Esophagus squamous epithelium (tissue), 5 donors: ENCODE measurements at regions of chr6 and their contacts with region 1.

Region 1: DNA sequence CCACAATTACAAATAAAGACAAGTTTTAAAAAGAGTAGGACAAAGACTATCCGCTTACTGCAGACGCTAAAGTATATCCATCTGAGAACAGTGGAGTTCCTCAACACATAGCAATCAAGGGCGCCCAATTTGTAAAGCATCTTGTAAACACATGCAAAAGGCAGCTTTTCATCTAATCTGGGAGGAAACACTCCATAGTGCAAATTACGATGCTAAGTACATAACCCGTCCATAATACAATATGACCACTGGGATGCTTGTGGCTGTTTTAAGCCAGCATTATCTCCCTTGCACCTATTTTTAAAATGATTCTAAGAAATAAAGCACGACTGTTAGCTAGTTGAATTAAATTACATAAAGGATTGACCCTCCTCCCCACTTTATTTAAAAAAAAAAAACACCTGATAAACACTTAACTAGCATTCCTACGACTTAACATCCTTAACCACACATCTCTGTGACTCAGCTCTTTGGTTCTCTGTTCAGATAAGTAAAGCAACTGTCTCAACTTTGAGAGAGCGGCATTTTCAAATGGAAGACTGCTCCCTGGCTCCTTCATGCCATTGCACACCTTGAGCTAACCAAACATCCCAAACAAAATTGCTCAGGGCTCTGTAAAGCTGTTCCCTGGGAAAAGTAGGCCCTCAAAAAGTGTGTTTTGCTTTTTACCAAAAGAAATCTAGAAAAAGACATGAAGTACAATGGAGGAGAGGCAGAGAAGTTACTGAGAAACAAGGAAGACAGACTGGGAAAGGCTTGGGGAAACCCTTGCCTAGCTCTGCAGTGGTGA is 14.2 kb downstream of the SLC22A23 start:
- DNase-seq: no peak
- H3K4me3 ChIP-seq: no peak overlapping the region
- H3K27ac ChIP-seq: no peak overlapping the region
- H3K4me1 ChIP-seq: peaks cover 11 to 50% (median 15%) of the 10 kb centered on the region in 3 donors
- H3K27me3 ChIP-seq: no peaks in the 10 kb centered on the region
- CTCF ChIP-seq: no peak
- POLR2A ChIP-seq: no peak

Region 2: DNA sequence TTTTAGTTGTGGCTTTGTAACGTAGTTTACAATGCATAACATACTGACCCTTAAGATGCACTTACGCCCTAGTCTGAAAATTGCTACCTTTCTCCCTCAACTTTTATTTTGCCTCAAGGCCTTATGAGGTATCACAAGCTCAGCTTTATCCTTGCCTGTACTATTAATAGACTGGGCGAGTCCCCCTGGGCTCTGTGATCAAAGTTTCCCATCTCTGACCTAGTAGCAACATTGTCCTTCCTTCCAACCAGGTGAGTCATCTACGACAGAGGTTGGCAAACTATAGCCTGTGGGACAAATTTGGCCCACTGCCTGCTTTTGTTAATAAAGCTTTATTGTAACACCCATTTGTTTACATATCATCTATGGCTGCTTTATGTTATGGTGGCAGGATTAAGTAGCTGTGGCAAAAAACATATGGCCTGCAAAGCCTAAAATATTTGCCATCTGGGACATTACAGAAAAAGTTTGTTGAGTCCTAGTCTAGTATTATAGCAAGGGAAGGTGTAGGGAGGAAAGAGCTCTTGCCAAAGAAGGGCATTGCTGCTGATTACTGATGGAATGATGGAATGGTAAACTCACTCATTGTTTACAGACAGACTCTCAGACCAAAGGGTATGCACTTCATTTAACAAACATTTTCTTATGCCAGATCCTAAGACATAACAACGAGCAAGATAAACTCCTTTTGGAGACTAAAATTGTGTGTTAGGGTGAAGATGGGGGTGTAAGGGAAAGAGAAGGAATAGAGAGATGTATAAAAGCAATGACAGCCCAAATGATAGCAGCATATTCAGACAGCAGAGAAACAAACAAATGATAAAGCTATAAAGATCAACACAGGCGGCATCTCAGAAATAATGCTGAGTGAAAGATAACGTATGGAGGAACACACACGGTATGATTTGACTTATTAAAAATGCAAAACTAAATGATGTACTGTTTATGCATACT is 60.0 kb before region 1 on chr6:
- intact Hi-C with region 1: no loop called
- DNase-seq: no peak
- H3K4me3 ChIP-seq: no peak overlapping the region
- H3K27ac ChIP-seq: peak overlapping the region in 3 of 4 donors; percentile 65 to 87 (median 82)
- H3K4me1 ChIP-seq: peaks cover 20 to 97% (median 28%) of the 10 kb centered on the region in 3 donors
- H3K27me3 ChIP-seq: no peaks in the 10 kb centered on the region
- CTCF ChIP-seq: no peak
- POLR2A ChIP-seq: no peak

Region 3: GRCh38 chr6:3721810-3722626 is 279.4 kb after region 1 on chr6:
- intact Hi-C with region 1: loop called (anchors 10 kb)
- DNase-seq: no peak
- H3K4me3 ChIP-seq: no peak overlapping the region
- H3K27ac ChIP-seq: peak overlapping the region in 1 of 4 donors; percentile 38
- H3K4me1 ChIP-seq: peaks cover 0 to 38% (median 0%) of the 10 kb centered on the region in 3 donors
- H3K27me3 ChIP-seq: no peaks in the 10 kb centered on the region
- CTCF ChIP-seq: no peak
- POLR2A ChIP-seq: no peak